PC-3 (cell line): ENCODE measurements at regions of chr1 and their contacts with region 1.

Region 1: DNA sequence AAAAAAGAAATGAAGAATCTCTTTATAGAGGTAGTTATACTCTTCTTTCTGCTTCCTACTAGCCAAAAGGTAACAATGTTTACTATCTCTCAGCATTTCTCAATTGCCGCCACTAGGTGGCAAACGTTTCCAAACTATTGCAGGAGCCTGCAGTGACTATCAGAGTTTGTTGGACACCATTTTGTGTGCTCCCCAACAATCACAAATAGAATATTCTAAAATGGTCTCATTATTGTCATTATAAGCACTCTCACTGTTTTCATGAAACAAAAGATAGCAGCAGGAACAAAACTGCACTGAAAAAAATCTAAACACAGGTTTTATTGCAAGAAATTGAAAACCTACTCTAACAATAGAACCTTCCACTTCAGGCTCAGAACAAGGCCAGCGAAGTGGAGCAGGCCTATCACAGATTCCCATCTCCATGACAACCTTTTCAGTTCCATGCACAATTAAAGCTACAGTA is 83.9 kb upstream of the PLPPR4 start:
- DNase-seq: peak; percentile 90
- ATAC-seq: peak; percentile 79
- H3K4me3 ChIP-seq: no peak overlapping the region
- H3K27ac ChIP-seq: no peak overlapping the region
- H3K4me1 ChIP-seq: peaks cover 13% of the 10 kb centered on the region
- H3K27me3 ChIP-seq: no peaks in the 10 kb centered on the region
- CTCF ChIP-seq: peak; percentile 92

Region 2: GRCh38 chr1:98884864-98885263 is 295.5 kb before region 1 on chr1:
- CTCF ChIA-PET with region 1: interaction called, 8 read pairs
- POLR2A ChIA-PET with region 1: interaction called, 4 read pairs
- intact Hi-C with region 1: loop called (anchors 1 kb)
- DNase-seq: peak; percentile 54
- ATAC-seq: peak; percentile 42
- H3K4me3 ChIP-seq: no peak overlapping the region
- H3K27ac ChIP-seq: no peak overlapping the region
- H3K4me1 ChIP-seq: peaks cover 4% of the 10 kb centered on the region; the same call in 1 of the 2 replicates
- H3K27me3 ChIP-seq: no peaks in the 10 kb centered on the region
- CTCF ChIP-seq: peak; percentile 60

Region 3: DNA sequence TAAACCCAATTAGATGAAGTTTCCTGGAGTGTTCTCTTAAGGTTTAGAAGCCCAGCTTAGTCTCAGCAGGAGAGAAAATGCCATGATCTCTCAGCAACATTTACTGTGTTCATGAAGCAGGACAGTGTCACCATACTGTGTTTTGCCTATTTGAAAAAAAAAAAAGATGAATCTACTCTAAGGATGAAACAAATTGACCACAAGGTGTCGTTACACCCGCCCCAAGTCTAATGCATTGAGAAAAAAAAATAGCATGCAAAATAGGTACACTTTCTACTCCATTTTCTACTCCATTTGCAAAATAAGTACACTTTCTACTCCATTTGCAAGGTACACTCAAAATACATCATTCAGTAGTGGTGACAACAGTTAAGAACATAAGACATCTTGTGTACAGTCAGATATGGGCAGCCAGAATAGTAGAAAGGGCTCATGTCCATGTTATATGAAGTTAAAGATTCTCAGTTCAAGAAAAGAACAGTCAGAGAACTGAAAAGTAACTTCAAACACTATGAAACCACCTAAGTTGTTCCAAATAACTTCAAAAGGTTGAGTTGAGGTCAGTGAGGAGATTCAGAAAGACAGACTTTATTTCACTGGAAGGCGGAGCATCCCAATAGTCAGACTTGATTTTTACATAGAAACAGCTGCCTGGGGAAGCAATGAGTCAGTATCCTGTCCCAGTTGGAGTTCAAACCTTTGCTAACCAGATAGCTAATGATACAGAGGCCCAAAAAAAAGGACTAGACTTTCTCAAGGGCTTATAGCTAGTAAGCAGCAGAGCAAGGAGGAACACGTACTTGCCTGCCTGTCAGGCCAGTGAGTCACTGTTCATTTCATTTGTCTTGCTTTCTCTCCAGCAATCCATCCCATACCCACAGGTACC is 189.0 kb before region 1 on chr1:
- CTCF ChIA-PET with region 1: interaction called, 3 read pairs
- POLR2A ChIA-PET with region 1: no interaction called
- intact Hi-C with region 1: loop called (anchors 2 kb)
- DNase-seq: peak; percentile 81
- ATAC-seq: peak; percentile 95
- H3K4me3 ChIP-seq: no peak overlapping the region
- H3K27ac ChIP-seq: peak overlapping the region; percentile 55
- H3K4me1 ChIP-seq: peaks cover 16% of the 10 kb centered on the region
- H3K27me3 ChIP-seq: no peaks in the 10 kb centered on the region
- CTCF ChIP-seq: peak; percentile 88

Region 4: DNA sequence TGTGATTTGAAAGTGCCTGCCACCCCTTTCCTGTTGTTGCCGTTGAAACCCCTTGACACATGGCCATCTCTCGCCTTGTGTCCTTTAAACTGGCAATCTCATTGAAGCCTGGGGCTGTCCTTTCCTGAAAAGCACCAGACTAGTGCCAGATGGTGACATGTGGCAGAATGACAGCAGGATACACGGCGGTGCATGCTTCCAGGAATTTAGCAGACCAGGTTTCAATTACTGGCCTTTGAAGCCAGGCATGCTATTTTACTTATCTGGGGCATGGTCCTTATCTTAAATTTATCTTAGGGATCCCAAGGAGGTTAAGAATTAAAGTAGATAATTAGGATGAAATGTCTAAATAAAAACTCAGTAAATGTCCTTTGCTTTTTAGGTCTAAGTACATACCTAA is 99.1 kb after region 1 on chr1:
- CTCF ChIA-PET with region 1: no interaction called
- POLR2A ChIA-PET with region 1: no interaction called
- intact Hi-C with region 1: no loop called
- DNase-seq: no peak
- ATAC-seq: no peak
- H3K4me3 ChIP-seq: no peak overlapping the region
- H3K27ac ChIP-seq: no peak overlapping the region
- H3K4me1 ChIP-seq: no peaks in the 10 kb centered on the region
- H3K27me3 ChIP-seq: no peaks in the 10 kb centered on the region
- CTCF ChIP-seq: no peak

Region 5: GRCh38 chr1:99526926-99527477 is 346.6 kb after region 1 on chr1:
- CTCF ChIA-PET with region 1: no interaction called
- POLR2A ChIA-PET with region 1: no interaction called
- intact Hi-C with region 1: loop called (anchors 2 kb)
- DNase-seq: peak; percentile 51
- ATAC-seq: peak; percentile 43; the same call in 1 of the 2 replicates
- H3K4me3 ChIP-seq: no peak overlapping the region
- H3K27ac ChIP-seq: no peak overlapping the region
- H3K4me1 ChIP-seq: no peaks in the 10 kb centered on the region
- H3K27me3 ChIP-seq: no peaks in the 10 kb centered on the region
- CTCF ChIP-seq: peak; percentile 72

Region 6: GRCh38 chr1:99623554-99623953 is 443.2 kb after region 1 on chr1:
- CTCF ChIA-PET with region 1: no interaction called
- POLR2A ChIA-PET with region 1: no interaction called
- intact Hi-C with region 1: no loop called
- DNase-seq: no peak
- ATAC-seq: no peak
- H3K4me3 ChIP-seq: no peak overlapping the region
- H3K27ac ChIP-seq: no peak overlapping the region
- H3K4me1 ChIP-seq: no peaks in the 10 kb centered on the region
- H3K27me3 ChIP-seq: no peaks in the 10 kb centered on the region
- CTCF ChIP-seq: no peak

Region 7: GRCh38 chr1:99737016-99737415 is 556.6 kb after region 1 on chr1:
- CTCF ChIA-PET with region 1: no interaction called
- POLR2A ChIA-PET with region 1: no interaction called
- intact Hi-C with region 1: loop called (anchors 1 kb)
- DNase-seq: peak; percentile 61
- ATAC-seq: peak; percentile 94
- H3K4me3 ChIP-seq: no peak overlapping the region
- H3K27ac ChIP-seq: no peak overlapping the region
- H3K4me1 ChIP-seq: no peaks in the 10 kb centered on the region
- H3K27me3 ChIP-seq: no peaks in the 10 kb centered on the region
- CTCF ChIP-seq: peak; percentile 72